ENCODE measurements at regions of chr17 and their contacts with region 1.

Region 1: GRCh38 chr17:19744922-19745757 is 3.0 kb downstream of the ALDH3A1 start:
- DNase-seq: peak; percentile 72 to 90 (median 85)
- ATAC-seq: peak; percentile 98
- H3K4me3 ChIP-seq: peak overlapping the region; percentile 26 to 31
- H3K4me3 Mint-ChIP-seq: peak overlapping the region; percentile 67
- H3K27ac ChIP-seq: no peak overlapping the region
- H3K27ac Mint-ChIP-seq: no peak overlapping the region
- H3K4me1 ChIP-seq: peaks cover 5% of the 10 kb centered on the region
- H3K4me1 Mint-ChIP-seq: peaks cover 8% of the 10 kb centered on the region
- H3K27me3 ChIP-seq: no peaks in the 10 kb centered on the region
- H3K27me3 Mint-ChIP-seq: peaks cover 11% of the 10 kb centered on the region
- CTCF ChIP-seq: peak; percentile 77

Region 2: GRCh38 chr17:19733953-19734526 is 11.1 kb before region 1 on chr17:
- CTCF ChIA-PET with region 1: interaction called, 13 read pairs
- POLR2A ChIA-PET with region 1: no interaction called
- intact Hi-C with region 1: no loop called
- DNase-seq: no peak
- ATAC-seq: no peak
- H3K4me3 ChIP-seq: no peak overlapping the region
- H3K4me3 Mint-ChIP-seq: no peak overlapping the region
- H3K27ac ChIP-seq: no peak overlapping the region
- H3K27ac Mint-ChIP-seq: no peak overlapping the region
- H3K4me1 ChIP-seq: no peaks in the 10 kb centered on the region
- H3K4me1 Mint-ChIP-seq: no peaks in the 10 kb centered on the region
- H3K27me3 ChIP-seq: no peaks in the 10 kb centered on the region
- H3K27me3 Mint-ChIP-seq: no peaks in the 10 kb centered on the region
- CTCF ChIP-seq: no peak